Activated CD4-positive, alpha-beta T cell treated with anti-CD3 and anti-CD28 coated beads for 36 hours (primary cell): ENCODE measurements at regions of chrX and their contacts with region 1.

Region 1: DNA sequence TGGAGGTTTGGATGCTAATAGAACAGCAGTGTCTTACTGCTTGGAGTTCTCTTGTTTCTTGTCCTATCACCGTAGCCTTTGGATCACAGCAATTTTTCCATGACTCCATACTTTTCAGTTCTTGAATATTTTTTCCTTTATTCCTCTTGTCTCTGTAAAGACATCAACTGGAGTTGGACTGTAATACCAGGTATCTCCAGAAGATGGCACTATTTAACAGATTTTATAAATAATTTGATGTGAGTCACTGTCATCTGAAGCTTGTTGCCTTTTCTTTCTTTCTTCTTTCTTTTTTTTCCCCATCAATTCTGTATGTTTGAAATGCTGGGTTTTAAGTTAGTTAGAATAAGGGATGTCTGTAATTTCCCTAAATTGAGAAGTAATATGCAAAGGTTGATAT is 24.1 kb downstream of the HPRT1 start:
- DNase-seq: no peak
- ATAC-seq: no peak
- H3K4me3 Mint-ChIP-seq: no peak overlapping the region
- H3K27ac Mint-ChIP-seq: no peak overlapping the region
- H3K4me1 Mint-ChIP-seq: no peaks in the 10 kb centered on the region
- H3K27me3 Mint-ChIP-seq: no peaks in the 10 kb centered on the region

Region 2: GRCh38 chrX:134764212-134764785 is 280.3 kb after region 1 on chrX:
- CTCF ChIA-PET with region 1: interaction called, 16 read pairs
- POLR2A ChIA-PET with region 1: no interaction called
- intact Hi-C with region 1: loop called in 1 of 2 experiments (anchors 5 kb)
- DNase-seq: no peak
- ATAC-seq: peak; percentile 99
- H3K4me3 Mint-ChIP-seq: no peak overlapping the region
- H3K27ac Mint-ChIP-seq: no peak overlapping the region
- H3K4me1 Mint-ChIP-seq: peaks cover 6% of the 10 kb centered on the region
- H3K27me3 Mint-ChIP-seq: no peaks in the 10 kb centered on the region

Region 3: GRCh38 chrX:134782796-134783195 is 298.8 kb after region 1 on chrX:
- CTCF ChIA-PET with region 1: interaction called, 5 read pairs
- POLR2A ChIA-PET with region 1: no interaction called
- intact Hi-C with region 1: loop called (anchors 5 kb)
- DNase-seq: no peak
- ATAC-seq: no peak
- H3K4me3 Mint-ChIP-seq: no peak overlapping the region
- H3K27ac Mint-ChIP-seq: no peak overlapping the region
- H3K4me1 Mint-ChIP-seq: no peaks in the 10 kb centered on the region
- H3K27me3 Mint-ChIP-seq: no peaks in the 10 kb centered on the region

Region 4: DNA sequence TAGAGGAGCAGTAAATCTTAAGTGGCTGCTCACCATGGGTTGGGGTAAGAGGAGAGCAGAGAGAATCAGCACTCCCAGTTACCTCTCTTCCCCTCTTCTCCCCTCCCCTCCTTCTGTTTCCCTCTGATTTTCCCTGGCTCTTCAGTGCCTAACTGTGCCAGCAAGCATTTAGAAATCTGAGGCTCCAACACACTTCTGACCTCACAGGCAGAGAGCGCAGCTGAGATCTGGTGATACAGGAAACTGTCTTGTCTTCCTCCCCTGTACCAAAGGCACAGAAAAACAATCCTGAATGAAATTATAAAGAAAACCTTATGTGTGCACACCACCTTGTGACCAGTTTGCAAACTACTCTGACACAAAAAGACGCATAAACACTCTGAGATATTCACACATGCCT is 424.3 kb after region 1 on chrX:
- CTCF ChIA-PET with region 1: no interaction called
- POLR2A ChIA-PET with region 1: no interaction called
- intact Hi-C with region 1: loop called in 1 of 2 experiments (anchors 5 kb)
- DNase-seq: no peak
- ATAC-seq: peak; percentile 76
- H3K4me3 Mint-ChIP-seq: no peak overlapping the region
- H3K27ac Mint-ChIP-seq: no peak overlapping the region
- H3K4me1 Mint-ChIP-seq: peaks cover 5% of the 10 kb centered on the region
- H3K27me3 Mint-ChIP-seq: no peaks in the 10 kb centered on the region

Region 5: DNA sequence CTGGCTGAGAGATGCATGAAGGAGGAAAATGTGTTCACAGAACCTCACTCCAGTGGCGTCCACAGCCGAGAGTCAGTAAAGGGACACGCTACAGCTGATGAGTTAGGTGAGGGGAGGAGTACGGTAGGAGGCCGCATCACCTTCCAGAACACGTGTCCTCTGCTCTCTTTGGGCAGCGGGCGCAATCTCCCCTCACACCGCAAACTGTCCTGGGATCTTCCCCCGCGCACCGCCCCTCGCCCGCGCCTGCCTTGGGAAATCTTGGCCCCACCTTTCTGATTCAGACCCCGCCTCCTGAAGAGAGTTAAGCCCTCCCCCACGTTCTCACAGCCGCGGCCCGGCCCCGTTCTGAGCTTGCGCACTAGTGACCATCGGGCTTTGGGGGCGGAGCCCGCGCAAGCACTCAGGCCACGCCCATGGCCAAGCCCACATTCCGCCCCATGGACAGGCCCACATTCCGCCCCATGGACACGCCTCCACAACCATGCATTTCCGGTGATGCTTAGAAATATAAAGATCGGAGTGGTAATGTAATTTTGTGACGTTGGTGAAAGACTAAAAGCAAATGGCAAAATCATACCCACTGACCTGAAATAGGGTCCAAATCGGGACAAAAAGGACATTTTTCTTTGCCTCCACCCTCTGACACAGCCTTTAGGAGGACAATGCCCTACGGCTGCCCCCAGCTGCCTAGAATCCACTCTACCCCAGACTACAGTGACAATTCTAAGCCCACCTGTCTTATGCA is 520.0 kb after region 1 on chrX:
- CTCF ChIA-PET with region 1: no interaction called
- POLR2A ChIA-PET with region 1: no interaction called
- intact Hi-C with region 1: loop called in 1 of 2 experiments (anchors 5 kb)
- DNase-seq: peak; percentile 94
- ATAC-seq: peak; percentile 98
- H3K4me3 Mint-ChIP-seq: peak overlapping the region; percentile 78
- H3K27ac Mint-ChIP-seq: peak overlapping the region; percentile 69
- H3K4me1 Mint-ChIP-seq: peaks cover 14% of the 10 kb centered on the region
- H3K27me3 Mint-ChIP-seq: no peaks in the 10 kb centered on the region